H1 (cell line): ENCODE measurements at regions of chr6 and their contacts with region 1.

Region 1: DNA sequence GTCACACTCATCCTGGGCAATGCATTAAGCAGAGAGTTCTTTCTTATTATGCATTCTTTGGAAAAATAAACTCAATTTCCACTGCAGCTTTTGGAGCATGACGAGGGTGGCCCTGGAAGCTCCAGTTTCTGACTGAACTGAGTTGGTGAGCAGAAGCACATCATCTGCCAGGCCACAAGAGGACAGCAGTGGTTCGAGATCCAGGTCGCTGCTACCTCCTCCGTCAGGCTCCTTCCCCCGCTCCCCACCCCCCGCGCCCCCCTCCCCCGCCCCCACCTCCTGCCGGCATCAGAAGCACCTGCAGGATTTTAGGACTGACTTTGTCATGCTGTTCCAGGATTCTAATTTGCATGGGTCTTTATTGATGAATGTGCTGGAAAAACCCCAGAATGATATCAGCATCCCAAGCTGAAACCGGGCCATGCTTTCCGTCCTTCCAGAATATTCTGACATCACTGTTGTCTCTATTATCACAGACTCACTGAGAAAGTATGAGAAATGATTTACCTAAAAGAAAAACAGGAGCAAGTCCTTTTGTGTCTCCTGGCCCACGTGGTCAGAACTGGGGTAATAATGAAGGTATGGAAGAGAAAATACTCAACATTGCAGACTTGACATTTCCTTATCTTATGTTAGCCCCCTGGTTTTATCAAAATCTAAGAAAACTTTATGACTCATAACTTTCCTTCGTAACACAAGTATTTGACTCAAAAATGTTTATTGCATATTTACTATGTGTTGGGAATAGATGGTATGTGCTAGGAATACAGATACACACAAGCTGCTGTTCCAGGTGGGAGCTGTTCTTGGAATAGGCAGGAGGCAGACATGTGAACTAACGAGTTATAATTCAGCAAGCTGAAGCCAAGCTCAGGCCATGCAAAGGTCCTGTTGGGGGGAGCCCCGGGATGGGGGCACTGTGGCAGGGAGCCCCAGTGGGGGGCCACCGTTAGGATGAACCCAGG is 220.2 kb upstream of the EXOC2 start:
- DNase-seq: peak in 1 of 2 experiments; percentile 39
- H3K4me3 ChIP-seq: no peak overlapping the region
- H3K27ac ChIP-seq: no peak overlapping the region
- H3K4me1 ChIP-seq: peaks cover 0 to 2% (median 0%) of the 10 kb centered on the region in 4 experiments; a peak in 2 of 7 replicates
- H3K27me3 ChIP-seq: no peaks in the 10 kb centered on the region; a peak in 1 of 7 replicates
- CTCF ChIP-seq: peak; percentile 83 to 94 (median 84)
- EP300 ChIP-seq: no peak
- POLR2A ChIP-seq: no peak
- RAD21 ChIP-seq: peak; percentile 83 to 89

Region 2: DNA sequence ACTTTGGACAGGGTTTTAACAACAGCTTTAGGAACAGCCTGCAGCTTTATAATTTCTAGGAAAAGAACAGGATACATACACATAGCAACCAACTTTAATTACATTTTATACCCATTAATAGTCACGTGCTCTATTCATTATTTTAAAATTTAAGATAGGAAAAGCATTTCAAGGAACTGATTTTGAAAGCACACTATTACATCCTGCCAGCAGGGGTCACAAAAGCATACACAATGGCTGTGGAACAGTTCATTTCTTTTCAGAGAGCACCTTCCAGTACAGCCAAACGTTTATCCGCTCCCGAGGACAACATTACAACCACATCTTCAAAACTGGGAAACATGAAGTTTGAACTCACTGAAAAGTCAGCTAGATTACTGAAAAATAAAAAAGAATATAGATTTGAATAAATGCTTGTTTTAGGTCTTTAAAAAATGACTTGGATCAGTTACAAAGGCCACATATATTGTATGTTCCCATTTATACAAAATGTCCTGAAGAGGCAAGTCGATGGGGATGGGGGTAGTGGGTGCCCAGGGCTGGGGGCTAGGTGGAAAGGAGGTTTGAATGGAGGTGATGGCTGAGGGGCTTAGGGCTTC is 115.6 kb before region 1 on chr6:
- CTCF ChIA-PET with region 1: interaction called, 13 read pairs
- POLR2A ChIA-PET with region 1: no interaction called
- DNase-seq: peak in 1 of 2 experiments; percentile 53
- H3K4me3 ChIP-seq: no peak overlapping the region
- H3K27ac ChIP-seq: no peak overlapping the region
- H3K4me1 ChIP-seq: peaks cover 0 to 10% (median 7%) of the 10 kb centered on the region in 4 experiments; a peak in 4 of 7 replicates
- H3K27me3 ChIP-seq: no peaks in the 10 kb centered on the region
- CTCF ChIP-seq: peak in 2 of 3 experiments; percentile 43 to 54; a peak in 2 of 4 replicates
- EP300 ChIP-seq: no peak
- POLR2A ChIP-seq: no peak
- RAD21 ChIP-seq: peak; percentile 78 to 83

Region 3: DNA sequence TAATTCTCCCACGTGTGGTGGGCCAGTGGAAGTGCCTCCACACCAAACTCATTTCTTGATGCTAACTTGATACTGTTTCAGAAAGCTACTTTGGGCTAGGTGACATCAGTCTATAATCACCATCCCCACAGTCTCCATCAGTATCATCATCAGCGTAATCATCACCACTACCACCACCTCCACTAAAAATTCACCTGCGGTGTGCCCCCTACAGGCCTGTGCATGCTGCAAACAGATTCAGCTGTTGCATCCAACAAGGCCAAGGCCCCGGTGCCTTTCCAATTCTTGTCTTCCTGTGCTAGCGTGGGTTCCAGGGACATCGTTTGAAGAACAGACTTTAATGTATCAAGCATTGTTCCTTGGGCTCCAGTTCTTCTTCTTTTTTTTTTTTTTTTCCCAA is 18.9 kb before region 1 on chr6:
- CTCF ChIA-PET with region 1: interaction called, 10 read pairs
- POLR2A ChIA-PET with region 1: no interaction called
- DNase-seq: peak in 1 of 2 experiments; percentile 60
- H3K4me3 ChIP-seq: no peak overlapping the region
- H3K27ac ChIP-seq: no peak overlapping the region
- H3K4me1 ChIP-seq: no peaks in the 10 kb centered on the region
- H3K27me3 ChIP-seq: no peaks in the 10 kb centered on the region
- CTCF ChIP-seq: peak; percentile 49 to 71 (median 68)
- EP300 ChIP-seq: no peak
- POLR2A ChIP-seq: no peak
- RAD21 ChIP-seq: peak; percentile 50 to 56

Region 4: GRCh38 chr6:946546-946945 is 33.4 kb after region 1 on chr6:
- CTCF ChIA-PET with region 1: no interaction called
- POLR2A ChIA-PET with region 1: no interaction called
- DNase-seq: no peak
- H3K4me3 ChIP-seq: no peak overlapping the region
- H3K27ac ChIP-seq: no peak overlapping the region
- H3K4me1 ChIP-seq: no peaks in the 10 kb centered on the region
- H3K27me3 ChIP-seq: 0 out of 7 replicates have a peak, but pooled peaks cover 0 to 2% (median 0%) of the 10 kb centered on the region in 4 experiments
- CTCF ChIP-seq: no peak
- EP300 ChIP-seq: no peak
- POLR2A ChIP-seq: no peak
- RAD21 ChIP-seq: no peak

Region 5: DNA sequence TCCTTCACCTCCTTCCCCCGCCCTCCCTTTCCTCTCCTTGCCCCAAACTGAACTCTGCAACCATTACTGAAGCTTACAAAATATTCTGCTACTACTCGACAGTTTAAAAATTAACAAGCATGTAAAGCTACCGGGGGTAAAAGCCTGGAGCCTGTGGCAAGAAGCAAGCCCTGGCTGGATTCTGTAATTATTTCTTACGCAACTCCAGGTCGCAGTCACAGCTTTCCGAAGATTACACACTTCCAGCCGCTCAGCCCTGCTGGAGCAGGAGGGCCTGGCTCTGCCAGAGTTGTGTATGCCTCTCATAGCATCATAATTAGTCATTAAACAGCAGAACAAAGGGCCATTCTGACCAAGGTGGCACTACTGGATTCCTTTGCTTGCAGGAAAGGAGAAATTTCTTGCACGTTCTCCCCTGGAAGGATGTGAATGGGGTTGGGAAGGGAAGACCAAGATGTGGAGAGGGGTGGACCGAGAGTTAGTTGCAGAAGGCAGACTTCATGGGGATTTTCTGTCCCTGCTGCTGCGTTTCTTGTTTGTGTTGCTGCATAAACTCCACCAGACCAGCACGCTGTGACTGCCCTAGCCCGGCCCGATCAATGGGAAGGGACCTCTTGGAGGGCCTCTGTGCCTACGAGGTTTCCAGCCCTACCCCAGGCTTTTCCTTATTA is 422.3 kb after region 1 on chr6:
- CTCF ChIA-PET with region 1: interaction called, 13 read pairs
- POLR2A ChIA-PET with region 1: no interaction called
- DNase-seq: no peak
- H3K4me3 ChIP-seq: no peak overlapping the region
- H3K27ac ChIP-seq: no peak overlapping the region
- H3K4me1 ChIP-seq: peaks cover 0 to 5% (median 3%) of the 10 kb centered on the region in 4 experiments; a peak in 3 of 7 replicates
- H3K27me3 ChIP-seq: peaks cover 0 to 4% (median 2%) of the 10 kb centered on the region in 4 experiments; a peak in 4 of 7 replicates
- CTCF ChIP-seq: no peak
- EP300 ChIP-seq: no peak
- POLR2A ChIP-seq: no peak
- RAD21 ChIP-seq: no peak